Motor neuron (in vitro differentiated cells): ENCODE measurements at regions of chr20 and their contacts with region 1.

Region 1: DNA sequence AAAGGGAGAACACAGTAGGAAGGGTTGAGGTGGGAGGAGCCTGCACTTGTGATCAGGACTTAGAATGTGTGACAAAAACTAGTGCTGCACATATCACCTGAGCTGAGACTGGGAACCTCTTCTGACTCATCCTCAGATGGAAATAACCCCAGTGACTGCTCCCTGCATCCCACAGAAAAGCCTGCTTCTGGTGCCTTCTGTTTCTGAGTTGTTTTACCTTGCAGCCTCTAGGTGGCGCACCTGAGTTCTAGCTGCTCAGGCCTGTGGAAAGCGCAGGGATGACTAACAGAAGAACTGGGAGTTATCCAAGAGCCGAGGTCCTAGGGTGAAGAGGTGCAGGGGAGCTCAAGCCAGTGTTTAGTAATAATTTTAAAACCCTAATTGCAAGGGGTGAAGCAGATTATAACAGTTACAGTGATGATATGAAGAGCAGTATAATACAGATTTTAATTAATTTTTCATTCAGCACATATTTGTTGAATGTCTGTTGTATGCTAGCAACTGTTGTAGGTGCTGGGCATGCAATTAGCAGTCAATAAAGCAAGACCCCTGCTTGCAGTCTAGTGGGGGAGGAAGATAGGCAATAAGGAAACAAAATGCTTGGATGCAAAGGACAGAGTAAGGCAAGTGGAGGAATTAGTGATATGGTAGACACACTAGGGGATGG is 302.5 kb downstream of the DHX35 start:
- ATAC-seq: peak; percentile 64 to 94 (median 78)
- H3K4me3 ChIP-seq: no peak overlapping the region
- H3K27ac ChIP-seq: no peak overlapping the region
- H3K4me1 ChIP-seq: peaks cover 13 to 28% of the 10 kb centered on the region in 2 donors

Region 2: DNA sequence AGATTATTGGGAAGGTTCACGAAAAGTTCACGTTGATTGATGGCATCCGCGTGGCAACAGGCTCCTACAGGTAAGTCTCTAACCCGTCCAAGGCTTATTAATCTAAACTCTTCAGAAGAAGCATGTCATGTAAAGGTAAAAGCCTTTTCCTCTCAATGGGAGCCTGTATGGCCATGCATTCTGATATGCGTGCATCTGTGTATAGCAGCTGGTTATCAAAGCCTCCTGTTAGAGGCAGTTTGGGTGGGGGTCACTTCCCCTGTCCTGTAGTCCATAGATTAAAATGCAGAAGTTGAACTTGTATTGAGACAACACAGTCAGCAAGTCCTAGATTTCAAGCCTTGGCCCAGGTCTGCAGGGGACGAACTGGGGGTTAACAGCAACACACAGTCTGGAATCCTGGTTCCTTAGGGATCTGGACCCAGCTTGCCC is 316.7 kb before region 1 on chr20:
- in situ Hi-C with region 1: no loop called
- ATAC-seq: peak in 1 of 8 experiments; percentile 81
- H3K4me3 ChIP-seq: no peak overlapping the region
- H3K27ac ChIP-seq: no peak overlapping the region
- H3K4me1 ChIP-seq: peaks cover 0 to 6% of the 10 kb centered on the region in 2 donors

Region 3: DNA sequence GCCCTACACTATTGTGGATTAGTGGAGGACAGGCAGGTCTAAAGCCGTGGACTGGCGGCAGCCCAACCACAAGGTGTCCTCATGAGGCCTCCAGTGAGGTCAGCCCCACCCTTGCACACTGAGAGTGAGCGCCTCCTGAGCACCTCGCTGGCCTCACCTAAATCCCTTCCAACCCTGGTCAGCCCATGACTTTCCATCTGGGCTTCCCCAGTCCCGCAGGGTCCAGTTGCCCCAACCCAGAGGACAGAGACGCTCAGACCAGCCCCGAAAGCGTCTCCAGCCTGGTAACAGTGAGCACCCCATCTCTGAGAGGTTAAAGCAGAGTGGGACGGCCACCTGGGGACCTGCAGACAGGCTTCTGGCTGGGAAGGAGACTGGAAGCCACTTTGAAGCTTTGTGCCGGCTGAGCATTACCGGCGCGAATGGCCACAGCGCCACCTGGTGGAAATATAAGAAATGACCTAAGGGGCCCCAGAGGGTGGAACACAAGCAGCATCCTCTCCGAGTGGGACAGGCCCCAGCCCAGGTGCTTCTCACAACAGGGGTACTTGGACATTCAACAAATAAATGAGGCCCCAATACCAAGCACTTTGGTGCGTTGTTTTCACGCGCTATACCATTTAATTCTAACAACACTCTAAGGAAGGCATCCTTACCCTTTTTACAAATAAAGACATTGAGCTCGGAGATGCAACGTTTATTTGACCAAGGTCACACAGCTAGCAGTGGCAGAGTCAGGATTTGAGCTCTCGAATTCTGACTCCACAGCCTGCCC is 1698.3 kb after region 1 on chr20:
- in situ Hi-C with region 1: loop called in 2 of 9 experiments (anchors 25 kb)
- ATAC-seq: peak; percentile 74 to 96 (median 92)
- H3K4me3 ChIP-seq: no peak overlapping the region
- H3K27ac ChIP-seq: no peak overlapping the region
- H3K4me1 ChIP-seq: peaks cover 3 to 5% of the 10 kb centered on the region in 2 donors